ENCODE measurements at regions of chr17 and their contacts with region 1.

Region 1: GRCh38 chr17:46108550-46109110 is 84.6 kb downstream of the KANSL1 start:
- DNase-seq: no peak
- H3K4me3 ChIP-seq: no peak overlapping the region
- H3K27ac ChIP-seq: no peak overlapping the region
- H3K4me1 ChIP-seq: 0 out of 2 replicates have a peak, but pooled peaks cover 5% of the 10 kb centered on the region
- H3K27me3 ChIP-seq: no peaks in the 10 kb centered on the region

Region 2: GRCh38 chr17:46044286-46044928 is 64.2 kb before region 1 on chr17:
- in situ Hi-C with region 1: loop called (anchors 10 kb)
- DNase-seq: peak; percentile 95
- H3K4me3 ChIP-seq: no peak overlapping the region
- H3K27ac ChIP-seq: peak overlapping the region; percentile 34
- H3K4me1 ChIP-seq: peaks cover 4% of the 10 kb centered on the region; the same call in 1 of the 2 replicates
- H3K27me3 ChIP-seq: no peaks in the 10 kb centered on the region